Posterior cingulate gyrus (tissue), 11 donors: ENCODE measurements at regions of chr4 and their contacts with region 1.

Region 1: GRCh38 chr4:87848622-87849351 is 16.0 kb downstream of the MEPE start:
- DNase-seq: peak in 7 of 10 donors; percentile 37 to 91 (median 60)

Region 2: DNA sequence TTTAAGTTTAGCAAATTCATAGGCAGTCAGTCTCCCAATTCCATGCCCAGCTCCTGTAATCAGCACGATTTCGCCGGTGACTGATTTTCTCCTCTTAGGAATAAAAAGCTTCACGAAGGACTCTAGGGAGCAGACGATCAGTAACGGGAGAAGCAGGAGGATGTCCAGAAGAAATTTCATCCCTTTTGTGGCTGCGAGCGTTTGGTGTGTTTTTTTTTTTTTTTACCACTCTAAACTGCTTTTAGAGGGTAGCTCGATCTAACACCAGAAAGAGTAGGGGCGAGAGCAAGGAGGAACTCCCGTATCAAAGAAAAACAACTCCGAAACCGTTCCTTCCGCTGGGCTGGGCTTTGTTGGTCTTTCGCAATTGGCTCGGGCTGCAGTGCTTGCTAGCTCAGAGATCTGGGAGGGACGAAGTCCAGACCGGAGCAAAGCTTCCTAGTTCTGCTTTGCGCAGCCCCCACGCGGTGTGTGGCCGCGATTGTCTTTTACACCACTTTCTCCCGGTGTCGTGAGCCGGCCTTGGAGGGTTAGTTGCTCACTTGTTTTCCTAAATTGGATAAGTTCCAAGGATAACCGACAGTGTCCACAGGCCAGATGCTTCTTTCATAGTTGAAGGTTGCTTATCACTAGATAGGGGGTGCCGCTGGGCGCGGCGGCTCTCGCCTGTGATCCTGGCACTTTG is 457.8 kb before region 1 on chr4 and contains the start of gene HSD17B11:
- intact Hi-C with region 1: loop called (anchors 10 kb)
- DNase-seq: peak; percentile 71 to 97 (median 84)

Region 3: GRCh38 chr4:87679449-87680169 is 169.2 kb before region 1 on chr4:
- intact Hi-C with region 1: loop called (anchors 1 kb)
- DNase-seq: peak in 8 of 10 donors; percentile 35 to 93 (median 65)

Region 4: GRCh38 chr4:87985097-87985886 is 136.5 kb after region 1 on chr4:
- intact Hi-C with region 1: loop called (anchors 5 kb)
- DNase-seq: peak; percentile 45 to 96 (median 76)

Region 5: GRCh38 chr4:88514557-88515511 is 666.0 kb after region 1 on chr4:
- intact Hi-C with region 1: loop called (anchors 10 kb)
- DNase-seq: no peak